CD4-positive, alpha-beta memory T cell (primary cell): ENCODE measurements at regions of chr1 and their contacts with region 1.

Region 1: DNA sequence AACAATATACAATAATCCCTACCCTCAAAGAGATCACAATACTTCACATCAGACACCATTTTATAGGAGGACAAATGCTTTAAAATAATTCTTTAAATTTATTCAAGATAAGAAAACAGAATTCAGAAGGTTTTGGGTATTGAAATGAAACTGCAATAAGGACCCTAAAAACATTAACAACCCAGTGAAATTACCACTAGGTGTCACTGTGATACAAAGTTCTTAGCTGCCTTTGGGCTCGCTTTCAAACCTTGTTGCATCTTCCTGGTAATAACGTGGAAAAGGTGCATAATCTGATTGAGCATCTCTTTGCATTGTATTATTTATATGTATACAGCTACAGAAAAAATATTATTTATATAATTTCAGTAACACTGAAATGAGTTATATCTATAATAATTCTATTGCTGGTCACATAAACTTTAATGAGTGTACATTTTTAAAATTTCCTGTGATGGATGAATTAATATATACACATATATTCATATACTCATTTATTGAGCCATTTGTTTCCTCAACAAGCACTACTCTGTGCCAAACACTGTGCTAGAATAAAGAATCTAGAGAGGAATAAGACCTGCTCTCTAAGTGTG is 185.2 kb downstream of the FAF1 start:
- DNase-seq: peak in 4 of 5 donors; percentile 26 to 32 (median 31)
- H3K4me3 ChIP-seq: no peak overlapping the region
- H3K4me3 Mint-ChIP-seq: no peak overlapping the region
- H3K27ac ChIP-seq: no peak overlapping the region
- H3K27ac Mint-ChIP-seq: peak overlapping the region in 1 of 7 donors; percentile 1
- H3K4me1 ChIP-seq: no peaks in the 10 kb centered on the region
- H3K4me1 Mint-ChIP-seq: peaks cover 7 to 13% (median 8%) of the 10 kb centered on the region in 4 donors
- H3K27me3 ChIP-seq: no peaks in the 10 kb centered on the region
- H3K27me3 Mint-ChIP-seq: no peaks in the 10 kb centered on the region

Region 2: GRCh38 chr1:50796272-50796671 is 21.4 kb after region 1 on chr1:
- CTCF ChIA-PET with region 1: interaction called, 11 read pairs
- POLR2A ChIA-PET with region 1: no interaction called
- intact Hi-C with region 1: no loop called
- DNase-seq: no peak
- H3K4me3 ChIP-seq: no peak overlapping the region
- H3K4me3 Mint-ChIP-seq: no peak overlapping the region
- H3K27ac ChIP-seq: no peak overlapping the region
- H3K27ac Mint-ChIP-seq: peak overlapping the region in 1 of 7 donors; percentile 58
- H3K4me1 ChIP-seq: no peaks in the 10 kb centered on the region
- H3K4me1 Mint-ChIP-seq: peaks cover 4 to 21% (median 9%) of the 10 kb centered on the region in 4 donors
- H3K27me3 ChIP-seq: no peaks in the 10 kb centered on the region
- H3K27me3 Mint-ChIP-seq: no peaks in the 10 kb centered on the region

Region 3: DNA sequence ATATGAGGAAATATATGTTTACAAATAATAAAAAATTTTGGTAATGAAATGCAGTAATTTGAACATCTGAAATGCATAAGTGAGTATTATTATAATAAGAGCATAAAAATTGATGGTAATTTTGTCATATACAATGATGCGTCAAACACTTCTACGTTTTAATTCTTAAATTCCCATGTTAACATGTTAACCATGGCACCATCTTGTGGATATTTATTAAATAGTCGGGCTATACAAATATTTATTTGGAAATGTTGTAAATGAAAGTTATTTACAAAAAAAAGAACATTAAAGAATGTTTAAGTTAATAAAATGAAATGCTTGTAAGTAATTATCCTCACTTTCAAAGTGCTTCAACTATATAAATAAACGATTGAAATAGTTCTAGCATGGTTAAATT is 270.0 kb after region 1 on chr1:
- CTCF ChIA-PET with region 1: no interaction called
- POLR2A ChIA-PET with region 1: no interaction called
- intact Hi-C with region 1: loop called (anchors 1 kb)
- DNase-seq: peak in 1 of 5 donors; percentile 9
- H3K4me3 ChIP-seq: no peak overlapping the region
- H3K4me3 Mint-ChIP-seq: no peak overlapping the region
- H3K27ac ChIP-seq: no peak overlapping the region
- H3K27ac Mint-ChIP-seq: no peak overlapping the region
- H3K4me1 ChIP-seq: no peaks in the 10 kb centered on the region
- H3K4me1 Mint-ChIP-seq: peaks cover 0 to 2% (median under 1%) of the 10 kb centered on the region in 4 donors
- H3K27me3 ChIP-seq: no peaks in the 10 kb centered on the region
- H3K27me3 Mint-ChIP-seq: peaks cover 13 to 18% of the 10 kb centered on the region in 2 donors

Region 4: GRCh38 chr1:52253401-52253800 is 1478.5 kb after region 1 on chr1:
- CTCF ChIA-PET with region 1: no interaction called
- POLR2A ChIA-PET with region 1: no interaction called
- intact Hi-C with region 1: no loop called
- DNase-seq: no peak
- H3K4me3 ChIP-seq: no peak overlapping the region
- H3K4me3 Mint-ChIP-seq: no peak overlapping the region
- H3K27ac ChIP-seq: no peak overlapping the region
- H3K27ac Mint-ChIP-seq: no peak overlapping the region
- H3K4me1 ChIP-seq: no peaks in the 10 kb centered on the region
- H3K4me1 Mint-ChIP-seq: peaks cover 0 to 3% (median 0%) of the 10 kb centered on the region in 4 donors
- H3K27me3 ChIP-seq: no peaks in the 10 kb centered on the region
- H3K27me3 Mint-ChIP-seq: peaks cover 0 to 2% of the 10 kb centered on the region in 2 donors